Activated CD8-positive, alpha-beta T cell treated with anti-CD3 and anti-CD28 coated beads for 36 hours (primary cell): ENCODE measurements at regions of chr3 and their contacts with region 1.

Region 1: GRCh38 chr3:11271986-11272904 is at the start of gene ATG7:
- DNase-seq: peak; percentile 98
- ATAC-seq: peak; percentile 99
- H3K4me3 Mint-ChIP-seq: peak within 1 kb of the TSS; percentile 85
- H3K27ac Mint-ChIP-seq: peak within 1 kb of the TSS; percentile 95
- H3K4me1 Mint-ChIP-seq: peaks cover 46% of the 10 kb centered on the region
- H3K27me3 Mint-ChIP-seq: no peaks in the 10 kb centered on the region
- CTCF ChIP-seq: no peak
- total RNA-seq, gene ATG7: 31.0 to 33.1 TPM

Region 2: DNA sequence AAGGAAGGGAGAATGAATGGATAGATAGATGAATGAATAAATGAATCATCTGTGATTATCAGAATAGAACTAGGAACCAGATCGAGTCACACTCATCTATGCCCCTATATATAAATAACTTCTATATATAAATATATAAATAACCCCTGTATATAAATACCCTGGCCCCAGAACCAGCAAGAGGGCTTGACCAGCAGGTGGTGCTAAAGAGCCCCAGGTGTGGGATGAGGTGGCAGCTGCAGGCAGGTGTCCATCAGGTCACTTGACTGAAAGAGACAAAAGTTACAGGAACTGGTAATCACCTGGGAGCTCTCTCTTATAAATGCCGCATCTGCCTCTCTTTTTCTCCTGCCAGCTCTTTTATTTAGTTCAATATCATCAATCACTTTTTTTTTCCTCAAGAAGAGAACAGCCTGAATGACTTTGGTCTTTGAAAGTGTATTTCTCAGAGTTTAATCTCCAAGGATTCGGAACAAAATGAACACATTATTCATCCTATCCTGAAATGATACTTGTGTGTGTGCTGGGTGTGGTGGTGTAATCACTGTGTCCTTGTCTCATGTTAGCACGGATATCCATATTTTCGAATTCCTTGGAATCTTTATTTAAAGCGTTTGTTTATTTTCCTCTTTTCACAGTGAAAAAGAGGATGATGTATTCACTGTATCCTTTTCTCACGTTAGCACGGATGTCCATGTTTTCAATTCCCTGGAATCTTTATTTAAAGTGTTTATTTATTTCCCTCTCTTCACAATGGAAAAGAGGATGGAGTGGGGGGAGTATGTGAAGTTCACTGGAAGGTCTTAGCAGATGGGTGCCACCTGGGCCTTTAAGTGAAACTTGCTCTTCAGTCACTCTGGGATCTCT is 35.4 kb before region 1 on chr3:
- CTCF ChIA-PET with region 1: interaction called, 13 read pairs
- POLR2A ChIA-PET with region 1: interaction called, 5 read pairs
- intact Hi-C with region 1: no loop called
- DNase-seq: peak; percentile 89
- ATAC-seq: no peak
- H3K4me3 Mint-ChIP-seq: no peak overlapping the region
- H3K27ac Mint-ChIP-seq: peak overlapping the region; percentile 30
- H3K4me1 Mint-ChIP-seq: peaks cover 39% of the 10 kb centered on the region
- H3K27me3 Mint-ChIP-seq: peaks cover 15% of the 10 kb centered on the region
- CTCF ChIP-seq: peak; percentile 90

Region 3: GRCh38 chr3:11244126-11244677 is 28.0 kb before region 1 on chr3:
- CTCF ChIA-PET with region 1: interaction called, 3 read pairs
- POLR2A ChIA-PET with region 1: interaction called, 15 read pairs
- intact Hi-C with region 1: no loop called
- DNase-seq: no peak
- ATAC-seq: no peak
- H3K4me3 Mint-ChIP-seq: no peak overlapping the region
- H3K27ac Mint-ChIP-seq: no peak overlapping the region
- H3K4me1 Mint-ChIP-seq: peaks cover 16% of the 10 kb centered on the region
- H3K27me3 Mint-ChIP-seq: peaks cover 10% of the 10 kb centered on the region
- CTCF ChIP-seq: no peak

Region 4: GRCh38 chr3:11288786-11289682 is 16.8 kb after region 1 on chr3:
- CTCF ChIA-PET with region 1: interaction called, 13 read pairs
- POLR2A ChIA-PET with region 1: interaction called, 21 read pairs
- intact Hi-C with region 1: no loop called
- DNase-seq: peak; percentile 55
- ATAC-seq: peak; percentile 50
- H3K4me3 Mint-ChIP-seq: peak overlapping the region; percentile 44
- H3K27ac Mint-ChIP-seq: peak overlapping the region; percentile 89
- H3K4me1 Mint-ChIP-seq: peaks cover 58% of the 10 kb centered on the region
- H3K27me3 Mint-ChIP-seq: no peaks in the 10 kb centered on the region
- CTCF ChIP-seq: no peak